HEK293 (cell line): ENCODE measurements at regions of chr17 and their contacts with region 1.

Region 1: DNA sequence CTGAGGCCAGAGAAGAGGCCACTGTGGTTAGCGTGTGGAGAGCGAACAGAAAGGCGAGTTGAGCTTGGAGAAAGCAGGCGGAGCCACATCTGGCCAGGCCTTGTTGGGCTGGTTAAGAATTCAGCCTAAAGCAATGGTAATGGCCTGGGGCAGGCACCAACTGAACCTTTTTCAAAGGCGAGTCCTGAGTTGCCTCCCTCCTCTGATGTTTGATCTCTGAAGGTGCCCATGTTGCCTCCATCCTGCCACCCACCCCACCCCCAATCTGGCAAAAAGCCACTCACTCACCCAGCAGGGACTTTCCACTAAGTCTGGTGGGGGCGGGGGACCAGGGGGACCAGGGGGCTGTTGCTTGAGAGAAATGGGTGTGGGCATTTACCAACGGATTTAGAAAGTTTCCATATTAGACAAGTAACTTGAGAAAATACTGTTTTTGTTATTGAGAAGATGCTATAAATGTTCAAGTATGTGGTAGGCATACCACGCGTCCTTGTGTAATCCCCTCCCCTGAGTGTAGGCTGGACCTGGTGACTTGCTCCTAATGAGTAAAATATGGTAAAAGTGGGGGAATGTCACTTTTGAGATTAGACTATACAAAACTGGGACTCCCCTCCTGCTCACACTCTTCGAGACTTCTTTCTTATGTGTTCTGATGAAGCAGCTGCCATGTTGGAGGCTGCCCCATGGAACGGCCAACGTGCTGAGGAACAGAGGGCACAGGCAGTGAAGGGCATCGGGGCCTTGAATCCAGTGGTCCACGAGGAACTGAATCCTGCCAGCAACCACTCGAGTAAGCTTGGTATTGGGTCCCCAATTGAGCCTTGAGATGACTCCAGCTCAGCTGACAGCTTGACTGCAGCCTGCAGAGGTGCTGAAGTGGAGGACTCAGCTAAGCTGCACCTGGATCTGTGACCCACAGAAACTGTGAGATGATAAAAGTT is 29.9 kb upstream of the TNS4 start:
- H3K4me3 ChIP-seq: no peak overlapping the region
- H3K27ac ChIP-seq: no peak overlapping the region
- H3K4me1 ChIP-seq: no peaks in the 10 kb centered on the region
- CTCF ChIP-seq: no peak

Region 2: GRCh38 chr17:40303009-40303657 is 228.2 kb before region 1 on chr17:
- CTCF ChIA-PET with region 1: interaction called, 17 read pairs
- POLR2A ChIA-PET with region 1: no interaction called
- H3K4me3 ChIP-seq: no peak overlapping the region
- H3K27ac ChIP-seq: no peak overlapping the region
- H3K4me1 ChIP-seq: peaks cover 25% of the 10 kb centered on the region
- CTCF ChIP-seq: peak; percentile 50

Region 3: GRCh38 chr17:40387680-40388079 is 143.6 kb before region 1 on chr17:
- CTCF ChIA-PET with region 1: interaction called, 13 read pairs
- POLR2A ChIA-PET with region 1: interaction called, 3 read pairs
- H3K4me3 ChIP-seq: no peak overlapping the region
- H3K27ac ChIP-seq: no peak overlapping the region
- H3K4me1 ChIP-seq: no peaks in the 10 kb centered on the region
- CTCF ChIP-seq: no peak

Region 4: DNA sequence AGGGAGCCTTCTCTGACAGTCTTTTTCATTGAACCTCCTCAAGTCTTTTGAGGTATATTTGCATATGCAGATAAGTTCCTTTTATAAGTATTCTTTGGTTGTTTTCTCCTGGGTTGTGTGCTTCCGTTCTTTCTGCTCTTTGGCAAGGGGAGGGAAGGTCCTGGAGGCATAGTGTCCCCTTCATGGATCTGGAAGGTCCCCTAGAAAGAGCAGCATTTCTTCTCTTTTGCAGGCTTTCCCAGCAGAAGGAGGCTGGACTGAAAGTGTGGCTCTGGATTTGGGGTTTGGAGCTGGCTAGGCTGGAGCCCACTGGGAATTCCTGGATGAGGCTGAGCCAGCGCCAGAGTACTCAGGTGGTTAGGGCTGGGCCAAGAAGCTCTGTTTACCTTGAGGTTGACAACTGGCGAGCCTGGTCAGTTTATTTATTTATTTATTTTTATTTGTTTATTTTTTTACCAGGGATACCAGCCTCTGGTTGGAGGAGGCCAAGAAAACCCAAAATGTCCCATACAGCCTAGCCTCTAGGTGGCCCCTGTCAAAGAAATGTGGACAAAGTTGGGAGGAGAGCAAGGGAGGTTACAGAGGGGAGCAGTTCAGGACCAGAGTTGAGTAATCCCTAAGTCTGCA is 108.2 kb before region 1 on chr17:
- CTCF ChIA-PET with region 1: interaction called, 84 read pairs
- POLR2A ChIA-PET with region 1: interaction called, 18 read pairs
- H3K4me3 ChIP-seq: no peak overlapping the region
- H3K27ac ChIP-seq: no peak overlapping the region
- H3K4me1 ChIP-seq: peaks cover 8% of the 10 kb centered on the region
- CTCF ChIP-seq: peak; percentile 49

Region 5: DNA sequence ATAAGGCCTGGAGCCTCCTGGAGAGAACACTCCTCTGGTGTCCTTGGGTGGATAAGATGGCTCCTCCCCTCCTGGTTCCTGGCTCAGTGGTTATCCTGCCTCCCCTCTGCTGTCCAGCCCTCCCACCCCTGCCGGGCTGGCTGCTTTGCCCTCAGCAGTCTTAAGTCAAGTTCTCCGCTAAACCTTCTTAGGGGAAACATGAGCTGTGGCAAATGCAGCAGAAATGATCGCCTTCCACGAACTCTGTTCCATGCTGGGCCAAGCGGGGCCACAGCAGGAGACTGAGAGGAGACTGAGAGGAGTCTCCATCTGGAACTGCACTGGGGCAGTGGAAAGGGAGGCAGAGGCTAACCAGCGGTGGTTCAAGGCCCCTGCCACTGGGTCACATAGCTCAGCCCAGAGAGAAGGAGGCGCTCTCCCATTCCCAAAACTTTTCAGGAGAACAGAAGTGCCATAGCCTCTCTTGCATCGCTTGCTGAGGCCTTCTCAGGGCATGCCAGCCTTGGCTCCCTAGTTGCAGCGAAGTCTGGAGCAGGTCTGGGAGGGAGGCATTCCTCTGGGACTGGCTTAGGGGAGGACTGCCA is 56.8 kb before region 1 on chr17:
- CTCF ChIA-PET with region 1: interaction called, 104 read pairs
- POLR2A ChIA-PET with region 1: interaction called, 5 read pairs
- H3K4me3 ChIP-seq: no peak overlapping the region
- H3K27ac ChIP-seq: no peak overlapping the region
- H3K4me1 ChIP-seq: no peaks in the 10 kb centered on the region; the same call in 1 of the 2 replicates
- CTCF ChIP-seq: no peak

Region 6: GRCh38 chr17:40551879-40552768 is 20.8 kb after region 1 on chr17:
- CTCF ChIA-PET with region 1: interaction called, 76 read pairs
- POLR2A ChIA-PET with region 1: interaction called, 4 read pairs
- H3K4me3 ChIP-seq: no peak overlapping the region
- H3K27ac ChIP-seq: no peak overlapping the region
- H3K4me1 ChIP-seq: peaks cover 4% of the 10 kb centered on the region
- CTCF ChIP-seq: no peak